ENCODE measurements at regions of chr11 and their contacts with region 1.

Region 1: DNA sequence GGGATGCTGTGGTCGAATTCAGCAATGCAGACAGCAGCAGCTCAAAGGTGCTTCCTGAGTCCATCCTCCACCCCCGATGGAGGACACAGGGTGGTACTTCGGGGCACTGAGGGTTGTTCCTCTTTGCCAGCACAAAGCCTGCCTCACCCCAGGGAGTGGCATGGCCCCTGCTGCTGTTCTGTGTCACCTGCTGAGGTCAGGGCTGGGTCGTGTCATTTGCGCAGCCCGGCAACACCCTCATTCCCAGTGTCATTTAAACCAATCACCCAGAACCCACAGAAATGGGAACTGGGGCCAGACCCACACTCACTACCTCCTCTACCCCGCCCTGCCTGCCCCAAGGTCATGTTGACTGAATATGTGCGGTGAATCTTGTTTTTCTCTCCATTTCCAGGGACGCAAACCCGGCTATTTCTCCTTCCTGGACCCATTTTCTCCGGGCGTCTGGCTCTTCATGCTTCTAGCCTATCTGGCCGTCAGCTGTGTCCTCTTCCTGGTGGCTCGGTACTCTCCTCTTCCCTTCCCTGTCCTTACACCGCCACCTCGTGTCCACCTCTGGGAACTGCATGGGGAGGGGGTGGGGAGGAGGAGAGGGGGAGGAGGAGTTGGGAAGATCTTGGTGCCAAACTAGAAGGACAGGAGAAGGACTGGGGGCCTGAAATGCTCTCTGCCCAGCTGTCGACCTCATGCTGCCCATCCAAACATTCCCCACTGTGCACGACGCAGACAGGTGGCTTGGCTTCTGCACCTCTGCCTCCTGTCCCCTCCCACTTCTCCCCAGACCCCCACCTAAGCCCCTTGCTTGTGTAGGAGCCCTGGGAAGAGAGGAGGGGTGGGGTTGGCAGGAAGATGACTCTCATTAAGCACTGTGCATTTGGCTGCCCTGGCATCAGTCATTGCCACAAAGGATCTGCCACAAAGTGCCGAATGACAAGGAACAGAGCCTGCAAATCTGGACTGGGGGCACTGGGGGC is 71.2 kb upstream of the TBCEL start:
- DNase-seq: peak; percentile 89
- H3K4me3 ChIP-seq: peak overlapping the region in 1 of 2 experiments; percentile 54; a peak in 1 of 4 replicates
- H3K27ac ChIP-seq: peak overlapping the region in 1 of 2 experiments; percentile 62; a peak in 2 of 4 replicates
- H3K4me1 ChIP-seq: peaks cover 0 to 34% of the 10 kb centered on the region in 2 experiments; a peak in 1 of 4 replicates
- H3K27me3 ChIP-seq: no peaks in the 10 kb centered on the region; the same call in 1 of the 2 replicates
- CTCF ChIP-seq: peak; percentile 73
- EP300 ChIP-seq: no peak
- RAD21 ChIP-seq: peak; percentile 93

Region 2: GRCh38 chr11:120462825-120463224 is 489.9 kb before region 1 on chr11:
- CTCF ChIA-PET with region 1: no interaction called
- POLR2A ChIA-PET with region 1: no interaction called
- DNase-seq: no peak
- H3K4me3 ChIP-seq: no peak overlapping the region
- H3K27ac ChIP-seq: no peak overlapping the region
- H3K4me1 ChIP-seq: no peaks in the 10 kb centered on the region
- H3K27me3 ChIP-seq: no peaks in the 10 kb centered on the region
- CTCF ChIP-seq: no peak
- EP300 ChIP-seq: no peak
- RAD21 ChIP-seq: no peak

Region 3: DNA sequence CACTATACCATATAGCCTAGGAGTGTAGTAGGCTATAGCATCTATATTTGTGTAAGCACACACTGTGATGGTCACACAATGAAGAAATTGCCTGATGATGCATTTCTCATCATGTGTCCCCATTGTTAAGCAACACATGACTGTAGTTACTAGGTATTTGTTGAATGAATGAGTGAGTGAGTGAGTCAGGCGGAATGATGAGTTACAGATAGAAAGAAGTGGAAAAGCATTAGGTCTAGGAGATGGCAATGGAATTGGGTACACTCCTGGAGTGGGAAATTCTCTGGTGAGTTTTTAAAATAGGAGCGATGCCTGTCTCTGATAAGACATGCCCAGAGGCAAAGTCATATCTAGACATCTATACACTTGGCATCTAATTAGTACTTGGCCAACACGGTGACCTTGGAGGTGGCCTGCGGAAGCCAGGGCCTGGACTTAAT is 89.4 kb before region 1 on chr11:
- CTCF ChIA-PET with region 1: no interaction called
- POLR2A ChIA-PET with region 1: no interaction called
- DNase-seq: no peak
- H3K4me3 ChIP-seq: no peak overlapping the region
- H3K27ac ChIP-seq: no peak overlapping the region
- H3K4me1 ChIP-seq: peaks cover 0 to 17% of the 10 kb centered on the region in 2 experiments; a peak in 1 of 4 replicates
- H3K27me3 ChIP-seq: no peaks in the 10 kb centered on the region
- CTCF ChIP-seq: no peak
- EP300 ChIP-seq: no peak
- RAD21 ChIP-seq: no peak

Region 4: DNA sequence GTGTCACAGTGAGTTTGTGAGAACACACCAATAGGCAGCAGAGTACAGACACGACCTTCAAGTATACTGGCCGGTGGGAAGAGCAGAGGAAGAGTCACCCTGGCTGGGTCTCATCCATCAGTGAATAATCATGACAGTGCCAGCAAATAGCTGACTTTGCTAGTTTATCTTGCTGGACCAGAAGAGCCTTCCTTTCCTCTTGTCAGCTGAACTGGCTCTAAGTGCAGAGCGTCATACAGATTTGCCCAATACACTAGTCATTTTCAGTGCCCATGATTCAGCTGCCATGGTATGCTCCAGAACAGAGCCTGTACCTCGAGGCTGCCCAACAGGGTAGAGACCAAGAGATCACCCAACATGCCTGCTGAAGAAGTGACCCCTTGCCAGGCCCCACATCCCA is 11.7 kb before region 1 on chr11:
- CTCF ChIA-PET with region 1: interaction called, 49 read pairs
- POLR2A ChIA-PET with region 1: no interaction called
- DNase-seq: no peak
- H3K4me3 ChIP-seq: no peak overlapping the region
- H3K27ac ChIP-seq: no peak overlapping the region
- H3K4me1 ChIP-seq: peaks cover 0 to 6% of the 10 kb centered on the region in 2 experiments; a peak in 1 of 4 replicates
- H3K27me3 ChIP-seq: no peaks in the 10 kb centered on the region; the same call in 1 of the 2 replicates
- CTCF ChIP-seq: no peak
- EP300 ChIP-seq: no peak
- RAD21 ChIP-seq: no peak

Region 5: DNA sequence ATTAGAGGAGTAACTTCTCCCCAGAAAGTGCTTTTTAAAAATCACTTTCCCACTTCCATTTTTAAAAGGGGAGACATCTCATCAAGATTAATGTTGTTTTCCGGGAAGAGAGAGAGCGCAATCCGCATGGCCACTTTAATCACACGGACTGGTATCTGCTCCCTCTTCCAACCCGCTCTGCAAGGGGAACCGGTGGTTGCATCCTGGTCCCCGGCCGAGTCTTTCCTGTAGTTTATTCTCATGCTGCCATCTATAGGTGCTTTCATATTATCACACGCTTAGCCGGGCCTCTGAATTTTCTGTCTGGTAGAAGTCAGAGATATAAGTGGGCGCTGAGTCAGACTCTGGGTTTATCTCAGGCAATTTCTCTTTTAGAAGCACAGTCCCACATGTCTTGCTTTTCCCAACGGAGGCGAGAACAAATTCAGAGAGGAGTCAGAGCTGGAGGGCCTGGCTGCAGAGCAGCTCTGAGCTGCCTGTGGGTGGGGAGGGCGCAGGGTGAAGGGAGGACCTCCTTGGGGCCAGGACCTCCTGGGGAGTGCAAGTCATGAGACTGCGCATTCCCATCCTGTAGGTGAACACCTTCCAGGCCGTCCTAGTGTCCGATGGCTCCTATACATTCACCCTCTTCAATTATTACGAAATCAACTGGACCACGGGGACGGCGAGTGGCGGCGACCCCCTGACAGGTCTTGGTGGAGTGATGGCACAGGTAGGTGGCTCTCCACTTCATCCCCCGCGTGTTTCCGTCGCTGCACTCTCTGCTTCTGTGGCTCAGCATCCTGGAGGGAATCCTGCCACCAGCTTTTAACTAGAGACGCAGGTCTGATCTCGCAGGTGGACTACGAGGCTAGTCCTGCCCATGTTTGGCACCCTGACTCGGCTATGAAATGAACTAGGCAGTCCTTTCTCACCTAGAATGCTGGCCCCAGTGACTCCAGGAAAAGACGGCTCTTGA is 160.0 kb after region 1 on chr11:
- CTCF ChIA-PET with region 1: interaction called, 22 read pairs
- POLR2A ChIA-PET with region 1: no interaction called
- DNase-seq: peak; percentile 85
- H3K4me3 ChIP-seq: no peak overlapping the region; a peak in 1 of 4 replicates
- H3K27ac ChIP-seq: no peak overlapping the region
- H3K4me1 ChIP-seq: peaks cover 0 to 17% of the 10 kb centered on the region in 2 experiments; a peak in 2 of 4 replicates
- H3K27me3 ChIP-seq: no peaks in the 10 kb centered on the region
- CTCF ChIP-seq: peak; percentile 63
- EP300 ChIP-seq: peak in 1 of 2 experiments; percentile 36; a peak in 1 of 4 replicates
- RAD21 ChIP-seq: peak; percentile 94